ENCODE measurements at regions of chr1 and their contacts with region 1.

Region 1: GRCh38 chr1:233518349-233518748 is 95.6 kb upstream of the KCNK1 start:
- DNase-seq: peak; percentile 85
- ATAC-seq: no peak
- H3K4me3 ChIP-seq: no peak overlapping the region
- H3K27ac ChIP-seq: no peak overlapping the region
- H3K4me1 ChIP-seq: peaks cover 17% of the 10 kb centered on the region
- H3K27me3 ChIP-seq: no peaks in the 10 kb centered on the region
- CTCF ChIP-seq: peak; percentile 98

Region 2: GRCh38 chr1:233473549-233474204 is 44.7 kb before region 1 on chr1:
- CTCF ChIA-PET with region 1: no interaction called
- POLR2A ChIA-PET with region 1: no interaction called
- intact Hi-C with region 1: no loop called
- DNase-seq: no peak
- ATAC-seq: peak; percentile 43
- H3K4me3 ChIP-seq: no peak overlapping the region
- H3K27ac ChIP-seq: no peak overlapping the region
- H3K4me1 ChIP-seq: no peaks in the 10 kb centered on the region
- H3K27me3 ChIP-seq: no peaks in the 10 kb centered on the region
- CTCF ChIP-seq: no peak

Region 3: GRCh38 chr1:233543340-233544255 is 25.2 kb after region 1 on chr1:
- CTCF ChIA-PET with region 1: interaction called, 3 read pairs
- POLR2A ChIA-PET with region 1: no interaction called
- intact Hi-C with region 1: loop called (anchors 1 kb)
- DNase-seq: peak; percentile 98
- ATAC-seq: peak; percentile 100
- H3K4me3 ChIP-seq: no peak overlapping the region
- H3K27ac ChIP-seq: peak overlapping the region; percentile 78
- H3K4me1 ChIP-seq: peaks cover 17% of the 10 kb centered on the region
- H3K27me3 ChIP-seq: no peaks in the 10 kb centered on the region
- CTCF ChIP-seq: no peak

Region 4: DNA sequence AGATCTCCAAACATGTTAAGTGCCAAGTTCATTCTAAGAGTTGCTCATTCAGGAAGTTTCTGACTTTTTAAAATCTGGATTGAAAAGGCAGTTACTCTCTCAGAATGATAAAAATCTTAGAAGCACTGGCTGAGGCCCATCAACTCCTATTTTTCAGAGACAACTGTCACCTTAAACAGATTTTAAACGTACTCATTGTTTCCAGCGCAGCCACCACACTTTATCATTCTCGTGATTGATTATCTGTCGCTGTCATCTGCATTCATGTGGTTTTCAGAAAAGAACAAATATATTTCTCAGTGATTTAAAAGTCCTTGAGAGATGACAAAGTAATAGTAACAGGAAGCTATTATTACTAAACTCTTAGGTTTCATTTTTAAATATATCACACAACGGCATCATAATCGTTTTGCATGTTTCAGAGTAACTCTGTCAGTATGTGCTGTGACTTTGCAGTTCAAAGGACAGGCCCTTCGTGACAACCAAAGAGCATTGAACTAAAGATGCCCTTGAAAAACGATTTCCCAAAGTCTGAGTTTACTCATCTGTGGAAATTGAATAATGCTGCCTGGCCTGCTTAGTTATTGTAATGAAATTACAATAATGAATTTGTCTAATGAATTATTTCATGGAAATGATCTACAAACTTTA is 80.7 kb after region 1 on chr1:
- CTCF ChIA-PET with region 1: interaction called, 10 read pairs
- POLR2A ChIA-PET with region 1: no interaction called
- intact Hi-C with region 1: no loop called
- DNase-seq: no peak
- ATAC-seq: no peak
- H3K4me3 ChIP-seq: no peak overlapping the region
- H3K27ac ChIP-seq: no peak overlapping the region
- H3K4me1 ChIP-seq: peaks cover 4% of the 10 kb centered on the region; the same call in 1 of the 2 replicates
- H3K27me3 ChIP-seq: no peaks in the 10 kb centered on the region
- CTCF ChIP-seq: no peak